PC-3 (cell line): ENCODE measurements at regions of chrX and their contacts with region 1.

Region 1: DNA sequence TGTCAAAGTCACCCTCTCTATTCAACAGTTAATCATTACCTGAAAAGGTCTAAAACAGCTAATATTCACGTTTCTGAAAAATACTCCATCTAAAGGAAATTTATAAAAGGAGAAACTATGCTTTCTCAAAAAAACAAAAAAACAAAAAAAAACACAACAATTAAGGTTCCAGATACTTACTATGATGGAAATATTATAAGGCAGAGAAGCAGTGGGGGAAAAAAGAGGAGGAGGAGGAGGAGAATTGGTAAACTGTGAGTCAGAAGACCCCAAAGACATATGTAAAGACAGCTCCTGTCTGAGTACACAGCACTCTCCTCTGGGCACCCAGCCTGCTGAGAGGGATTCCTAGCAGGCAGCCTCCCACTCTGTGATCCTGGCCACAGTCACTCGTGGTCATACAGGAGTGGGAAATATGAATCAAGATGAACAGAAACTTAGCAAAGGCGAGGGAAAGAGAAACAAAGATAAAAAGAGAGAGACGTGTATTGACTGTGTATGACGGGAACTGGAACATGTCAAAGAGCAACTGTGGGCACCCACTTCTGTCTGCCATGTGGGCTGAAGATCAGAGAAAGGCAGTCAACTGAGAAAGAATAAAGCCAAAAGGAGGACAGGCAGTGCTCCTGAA is 12.5 kb downstream of the KLHL15 start:
- DNase-seq: no peak
- ATAC-seq: no peak
- H3K4me3 ChIP-seq: no peak overlapping the region
- H3K27ac ChIP-seq: no peak overlapping the region
- H3K4me1 ChIP-seq: no peaks in the 10 kb centered on the region
- H3K27me3 ChIP-seq: no peaks in the 10 kb centered on the region
- CTCF ChIP-seq: no peak

Region 2: DNA sequence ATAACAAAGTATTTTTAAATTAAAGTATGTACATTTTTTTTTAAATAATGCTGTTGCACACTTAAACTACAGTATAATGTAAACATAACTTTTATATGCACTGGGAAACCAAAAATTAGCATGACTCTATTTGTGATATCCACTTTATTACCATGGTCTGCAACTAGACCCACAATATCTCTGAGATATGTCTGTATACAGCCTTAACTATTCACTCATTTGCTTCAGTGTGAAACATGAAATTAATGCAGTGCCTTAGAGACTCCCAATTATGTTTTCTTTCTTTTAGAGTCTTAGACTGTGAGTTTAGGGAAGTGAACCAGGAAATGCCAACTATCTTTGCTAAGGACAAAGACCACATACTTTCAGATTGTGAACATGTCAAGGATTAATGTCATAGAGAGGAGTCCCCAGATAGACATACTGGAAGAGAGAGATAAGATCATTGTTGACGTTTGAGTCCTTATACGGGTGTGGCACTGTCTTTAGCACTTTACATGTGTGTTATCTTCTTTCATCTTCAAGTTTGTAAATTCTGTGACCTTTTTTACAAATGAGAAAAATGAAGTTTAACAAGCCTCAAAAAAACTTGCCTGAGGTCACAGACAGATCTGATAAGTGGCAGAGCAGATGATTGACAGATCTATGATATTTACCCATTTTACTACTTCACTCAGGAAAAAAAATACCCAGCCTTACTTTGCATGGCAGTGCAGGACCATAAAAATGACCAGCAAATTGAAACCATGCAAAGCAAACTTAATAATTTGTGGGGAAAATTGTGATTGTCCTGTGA is 83.4 kb before region 1 on chrX:
- CTCF ChIA-PET with region 1: no interaction called
- POLR2A ChIA-PET with region 1: interaction called, 11 read pairs
- intact Hi-C with region 1: no loop called
- DNase-seq: peak; percentile 16
- ATAC-seq: peak; percentile 43
- H3K4me3 ChIP-seq: no peak overlapping the region
- H3K27ac ChIP-seq: no peak overlapping the region
- H3K4me1 ChIP-seq: peaks cover 8% of the 10 kb centered on the region
- H3K27me3 ChIP-seq: no peaks in the 10 kb centered on the region
- CTCF ChIP-seq: no peak